ENCODE measurements at regions of chr12 and their contacts with region 1.

Region 1: GRCh38 chr12:96516472-96517430 is 27.4 kb downstream of the CFAP54 start:
- DNase-seq: peak; percentile 71
- H3K4me3 Mint-ChIP-seq: peak overlapping the region; percentile 47
- H3K27ac Mint-ChIP-seq: peak overlapping the region; percentile 70
- H3K4me1 Mint-ChIP-seq: peaks cover 18% of the 10 kb centered on the region
- H3K27me3 Mint-ChIP-seq: no peaks in the 10 kb centered on the region

Region 2: DNA sequence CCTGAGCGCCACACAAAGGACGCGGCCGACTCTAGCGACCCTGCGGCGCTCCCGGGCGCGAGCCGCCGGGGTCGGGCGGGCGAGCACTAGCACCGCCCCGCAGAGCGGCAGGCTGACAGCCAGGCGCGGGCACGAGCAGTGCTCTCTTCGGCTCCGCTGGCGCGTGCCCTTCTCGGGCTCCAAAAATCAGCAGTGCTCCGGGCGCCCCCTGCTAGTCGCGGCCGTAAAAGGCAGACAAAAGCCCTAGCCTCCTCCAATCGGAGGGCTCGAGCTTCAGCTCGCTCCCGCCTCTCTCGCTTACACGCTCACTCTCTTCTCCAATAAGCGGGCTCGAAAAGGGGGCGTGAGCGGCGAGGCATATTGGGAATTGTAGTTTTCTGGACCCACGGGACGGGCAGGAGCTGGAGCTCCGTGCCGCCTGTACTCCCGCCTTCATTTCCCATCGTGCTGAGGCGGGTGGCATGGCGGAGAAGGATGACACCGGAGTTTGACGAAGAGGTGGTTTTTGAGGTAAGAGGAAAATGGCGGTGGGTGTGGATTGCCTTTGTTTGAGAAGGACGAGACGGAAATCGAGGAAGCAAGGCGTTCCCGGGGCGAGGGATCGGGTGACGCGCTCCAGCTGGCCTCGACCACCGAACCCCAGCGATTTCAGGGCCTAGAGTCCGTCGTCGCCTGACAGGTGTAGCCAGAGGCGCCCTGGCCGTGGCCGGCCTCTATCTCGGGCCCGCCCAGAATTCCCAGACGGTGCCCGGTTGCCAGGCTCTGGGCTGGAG is 1299.2 kb before region 1 on chr12 and contains the starts of genes FGD6 and VEZT:
- intact Hi-C with region 1: loop called (anchors 10 kb)
- DNase-seq: peak; percentile 98
- H3K4me3 Mint-ChIP-seq: peak within 1 kb of the TSS; percentile 97
- H3K27ac Mint-ChIP-seq: peak within 1 kb of the TSS; percentile 98
- H3K4me1 Mint-ChIP-seq: peaks cover 37% of the 10 kb centered on the region
- H3K27me3 Mint-ChIP-seq: peaks cover 9% of the 10 kb centered on the region
- total RNA-seq, gene FGD6: 0.64 and 0.86 TPM in 2 replicates
- total RNA-seq, gene VEZT: 58.1 and 64.7 TPM in 2 replicates

Region 3: DNA sequence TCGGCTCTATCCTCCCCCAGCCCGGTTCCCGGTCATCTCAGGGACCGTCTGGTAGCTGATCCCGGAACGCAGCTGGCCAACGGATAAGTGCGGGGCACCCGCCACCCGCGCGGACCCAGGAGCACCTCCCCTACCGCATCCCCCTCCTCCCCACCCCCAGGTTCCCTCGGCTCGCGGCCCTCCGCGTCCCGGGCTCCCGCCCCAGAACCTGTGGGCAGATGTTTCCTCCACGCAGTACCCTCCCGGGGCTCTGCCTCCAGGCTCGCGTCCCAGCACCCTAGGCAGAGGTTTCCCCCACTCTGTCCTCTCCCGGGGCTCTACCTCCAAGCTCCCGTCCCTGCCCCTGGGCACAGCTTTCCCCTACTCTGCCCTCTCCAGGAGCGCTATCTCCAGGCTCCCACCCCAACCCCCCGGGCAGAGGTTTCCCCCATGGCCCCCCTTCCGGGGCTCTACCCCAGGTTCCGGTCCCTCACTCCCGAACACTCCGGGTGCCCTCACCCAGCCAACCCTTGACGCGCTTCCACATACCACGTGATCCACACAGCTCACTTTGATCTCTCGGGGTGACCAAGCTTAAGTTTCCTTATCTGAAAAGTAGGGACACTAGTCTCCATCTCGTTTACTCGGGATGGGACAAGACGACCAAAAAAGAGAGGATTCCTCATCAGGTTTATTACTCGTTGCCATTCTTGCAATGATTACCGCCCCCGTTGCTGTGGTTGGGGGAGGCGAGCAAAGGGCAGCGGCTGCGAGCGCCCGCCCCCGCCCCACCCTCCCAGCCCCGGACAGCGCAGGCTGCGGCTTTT is 574.0 kb before region 1 on chr12 and contains the start of gene CCDC38:
- intact Hi-C with region 1: loop called (anchors 5 kb)
- DNase-seq: peak; percentile 78
- H3K4me3 Mint-ChIP-seq: peak within 1 kb of the TSS; percentile 92
- H3K27ac Mint-ChIP-seq: peak within 1 kb of the TSS; percentile 95
- H3K4me1 Mint-ChIP-seq: peaks cover 5% of the 10 kb centered on the region
- H3K27me3 Mint-ChIP-seq: peaks cover 24% of the 10 kb centered on the region
- total RNA-seq, gene CCDC38: not detected in 2 replicates

Region 4: DNA sequence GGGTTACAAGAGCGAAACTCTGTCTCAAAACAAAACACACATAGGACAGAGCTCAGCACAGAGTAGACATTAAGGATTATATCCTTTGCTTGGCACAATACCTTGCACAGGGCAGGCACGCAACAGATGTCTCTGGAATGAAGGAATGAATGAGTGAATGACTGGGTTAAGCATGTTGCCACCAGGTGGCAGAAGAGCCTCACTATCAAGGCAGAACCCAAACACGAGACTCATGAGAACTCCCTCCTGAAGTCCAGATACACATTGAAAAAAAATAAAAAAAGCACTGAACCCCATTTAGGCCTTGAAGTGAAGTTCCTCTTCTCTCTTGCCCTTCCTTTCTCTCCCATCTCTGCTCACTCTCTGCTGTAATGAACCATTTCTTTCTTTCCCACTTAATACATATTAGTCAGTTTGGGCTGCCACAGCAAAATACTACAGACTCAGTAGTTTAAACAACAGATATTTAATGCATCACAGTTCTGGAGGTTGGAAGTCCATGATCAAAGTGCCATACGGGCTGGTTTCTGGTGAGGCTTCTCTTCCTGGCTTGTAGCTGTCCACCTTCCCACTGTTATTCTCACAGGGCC is 454.8 kb before region 1 on chr12:
- intact Hi-C with region 1: loop called (anchors 1 kb)
- DNase-seq: peak; percentile 58
- H3K4me3 Mint-ChIP-seq: no peak overlapping the region
- H3K27ac Mint-ChIP-seq: no peak overlapping the region
- H3K4me1 Mint-ChIP-seq: peaks cover 27% of the 10 kb centered on the region
- H3K27me3 Mint-ChIP-seq: no peaks in the 10 kb centered on the region

Region 5: GRCh38 chr12:96237465-96238077 is 279.2 kb before region 1 on chr12:
- intact Hi-C with region 1: loop called (anchors 2 kb)
- DNase-seq: peak; percentile 46
- H3K4me3 Mint-ChIP-seq: peak overlapping the region; percentile 66
- H3K27ac Mint-ChIP-seq: peak overlapping the region; percentile 82
- H3K4me1 Mint-ChIP-seq: peaks cover 70% of the 10 kb centered on the region
- H3K27me3 Mint-ChIP-seq: no peaks in the 10 kb centered on the region

Region 6: DNA sequence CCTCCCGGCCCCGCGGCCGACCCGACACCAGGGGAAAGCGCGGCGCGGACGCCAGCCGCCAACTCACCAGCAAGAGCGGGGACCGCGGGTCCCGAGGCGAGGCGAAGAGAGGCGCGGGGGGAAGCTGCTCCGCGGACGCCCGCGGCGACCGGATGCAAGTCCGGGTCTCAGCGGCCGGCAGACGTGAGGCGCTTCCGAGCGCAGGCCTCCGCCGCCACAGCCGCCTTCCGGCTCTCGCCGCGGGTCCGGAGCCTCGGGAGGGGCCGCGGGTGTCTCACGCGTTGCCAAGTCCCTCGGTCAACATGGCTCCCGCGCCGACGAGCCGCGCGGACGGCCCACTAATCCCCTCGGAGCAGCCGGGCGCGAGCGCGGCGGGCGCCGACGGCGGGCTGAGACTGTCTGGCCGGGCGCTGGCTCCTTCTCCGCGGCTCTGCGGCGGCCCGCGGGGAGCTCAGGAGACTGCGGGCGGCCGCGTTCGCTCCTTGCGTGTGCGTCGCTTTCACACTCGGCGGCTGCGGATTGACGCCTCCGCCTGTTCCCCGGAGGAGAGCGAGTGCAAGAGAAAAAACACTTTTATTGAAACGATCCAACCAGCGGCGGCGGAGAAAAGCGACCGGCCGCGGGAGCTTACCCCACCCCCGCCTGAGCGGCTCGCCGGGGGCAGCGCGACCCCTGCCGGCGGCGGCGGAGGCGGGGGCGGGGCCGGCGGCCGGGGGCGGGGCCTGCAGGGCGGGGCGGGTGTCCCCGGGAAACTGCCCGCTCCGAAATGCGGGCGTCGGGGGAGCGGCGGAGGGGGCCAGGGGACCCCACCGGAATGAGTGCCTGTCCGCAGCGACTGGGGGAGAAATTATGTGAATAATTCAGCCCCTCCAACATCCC is 116.6 kb before region 1 on chr12 and contains the start of gene CDK17:
- intact Hi-C with region 1: loop called (anchors 1 kb)
- DNase-seq: peak; percentile 83
- H3K4me3 Mint-ChIP-seq: peak within 1 kb of the TSS; percentile 93
- H3K27ac Mint-ChIP-seq: peak within 1 kb of the TSS; percentile 97
- H3K4me1 Mint-ChIP-seq: peaks cover 66% of the 10 kb centered on the region
- H3K27me3 Mint-ChIP-seq: no peaks in the 10 kb centered on the region
- total RNA-seq, gene CDK17: 32.4 and 37.1 TPM in 2 replicates

Region 7: GRCh38 chr12:96501139-96501761 is 15.5 kb before region 1 on chr12:
- intact Hi-C with region 1: loop called (anchors 1 kb)
- DNase-seq: peak; percentile 33
- H3K4me3 Mint-ChIP-seq: peak overlapping the region; percentile 61
- H3K27ac Mint-ChIP-seq: peak overlapping the region; percentile 83
- H3K4me1 Mint-ChIP-seq: peaks cover 59% of the 10 kb centered on the region
- H3K27me3 Mint-ChIP-seq: peaks cover 4% of the 10 kb centered on the region

Region 8: GRCh38 chr12:96578526-96579125 is 61.9 kb after region 1 on chr12:
- intact Hi-C with region 1: no loop called
- DNase-seq: no peak
- H3K4me3 Mint-ChIP-seq: no peak overlapping the region
- H3K27ac Mint-ChIP-seq: no peak overlapping the region
- H3K4me1 Mint-ChIP-seq: no peaks in the 10 kb centered on the region
- H3K27me3 Mint-ChIP-seq: peaks cover 5% of the 10 kb centered on the region

Measured in activated T-helper 1 cell treated with anti-CD3 and anti-CD28 coated beads, Interleukin-12 subunit alpha, Interleukin-12 subunit beta, Interleukin-2, Interleukin-4 antibody, amounts not matched to agents 30 ng/mL and 10 ng/mL and 1 ng/mL, durations not matched to agents 14 hours and 24 hours and 36 hours (primary cell).